ENCODE measurements at regions of chr11 and their contacts with region 1.

Region 1: GRCh38 chr11:30594646-30595411 is 8.7 kb upstream of the MPPED2 start:
- DNase-seq: no peak
- ATAC-seq: no peak

Region 2: GRCh38 chr11:30346068-30346688 is 248.7 kb before region 1 on chr11:
- intact Hi-C with region 1: loop called (anchors 10 kb)
- DNase-seq: no peak
- ATAC-seq: peak; percentile 52

Region 3: DNA sequence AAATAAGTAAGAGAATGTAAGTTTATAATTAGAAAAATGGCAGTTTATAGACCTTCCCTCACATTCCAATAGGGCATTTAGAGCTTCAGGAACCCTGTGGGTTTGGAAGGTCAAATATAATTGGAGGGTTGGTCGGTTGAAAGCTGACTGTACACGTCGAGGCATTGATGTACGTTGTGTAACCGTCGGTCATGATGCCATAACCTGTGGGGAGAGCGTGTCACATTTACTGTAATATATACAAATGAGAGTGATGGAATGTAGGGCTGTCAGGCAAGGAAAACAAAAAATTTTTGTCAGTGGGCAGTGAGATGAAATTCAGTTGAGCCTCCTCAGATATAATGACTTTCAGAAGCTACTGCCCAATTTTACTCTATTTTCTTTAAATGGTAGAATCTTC is 183.4 kb before region 1 on chr11:
- intact Hi-C with region 1: no loop called
- DNase-seq: no peak
- ATAC-seq: no peak

Region 4: DNA sequence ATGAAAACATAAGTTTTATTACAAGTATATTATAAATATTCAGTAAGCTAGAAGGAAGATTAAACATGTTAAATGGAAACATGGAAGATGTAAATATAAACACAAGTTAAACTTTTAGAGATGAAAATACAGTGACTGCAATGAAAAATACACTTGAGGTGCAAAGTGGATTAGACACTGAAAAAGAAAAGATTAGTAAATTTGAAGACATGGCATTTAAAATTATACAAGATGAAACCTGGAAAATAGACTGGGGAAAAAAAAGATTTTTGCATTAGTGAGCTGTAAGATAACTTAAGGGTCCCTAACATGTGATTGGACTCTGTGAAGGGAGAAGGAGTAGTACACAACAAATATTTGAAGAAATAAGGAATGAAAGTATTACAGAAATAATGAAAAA is 948.0 kb after region 1 on chr11:
- intact Hi-C with region 1: no loop called
- DNase-seq: no peak
- ATAC-seq: no peak

Measured in left ventricle myocardium superior (tissue), 1 donor.